Heart right ventricle (tissue), 16 donors: ENCODE measurements at regions of chr19 and their contacts with region 1.

Region 1: DNA sequence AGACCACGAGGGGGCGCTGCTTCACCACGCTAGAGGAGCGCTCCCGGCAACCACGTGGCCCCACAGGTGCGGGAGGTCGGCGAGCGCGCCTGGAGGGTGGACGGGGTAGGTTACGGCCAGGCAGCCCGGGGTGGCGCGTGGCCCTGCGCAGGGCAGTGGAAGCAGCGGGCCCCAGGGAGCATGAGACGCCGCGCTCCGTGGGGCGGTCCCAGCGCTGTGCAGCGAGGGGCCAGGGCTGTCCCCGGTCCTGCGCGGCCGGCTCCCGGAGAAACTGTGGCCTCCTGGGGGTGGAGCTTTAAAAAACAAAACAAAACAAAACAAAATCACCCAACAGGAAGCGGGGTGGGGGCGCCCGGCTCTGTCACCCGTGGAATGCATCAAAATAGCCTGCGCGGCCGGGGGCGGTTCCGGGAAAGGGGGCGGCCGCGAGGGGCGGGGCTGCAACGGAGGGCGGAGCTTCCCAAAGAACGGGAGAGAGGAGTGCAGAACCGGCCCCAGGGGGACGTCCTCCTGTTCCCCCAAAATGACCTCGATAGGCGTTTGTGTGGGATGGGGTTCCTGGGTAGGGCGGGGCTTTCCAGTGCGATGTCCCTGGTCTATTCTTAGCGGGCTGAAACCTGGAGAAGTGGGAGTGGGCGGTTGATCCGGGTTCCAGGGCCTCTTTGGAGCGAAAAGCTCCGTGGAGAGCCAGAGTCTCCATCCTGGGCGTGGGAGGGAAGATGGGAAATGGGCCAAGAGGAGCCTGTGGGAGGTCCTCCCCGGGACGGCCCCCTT is 27.3 kb downstream of the NUMBL start:
- DNase-seq: peak; percentile 94 to 95
- ATAC-seq: peak; percentile 83 to 93 (median 90)
- H3K4me3 ChIP-seq: peak overlapping the region; percentile 36 to 83 (median 65)
- H3K27ac ChIP-seq: peak overlapping the region; percentile 70 to 94 (median 90)
- H3K4me1 ChIP-seq: peaks cover 0 to 23% (median 12%) of the 10 kb centered on the region in 9 donors
- H3K27me3 ChIP-seq: no peaks in the 10 kb centered on the region
- CTCF ChIP-seq: peak; percentile 96 to 100 (median 99)

Region 2: DNA sequence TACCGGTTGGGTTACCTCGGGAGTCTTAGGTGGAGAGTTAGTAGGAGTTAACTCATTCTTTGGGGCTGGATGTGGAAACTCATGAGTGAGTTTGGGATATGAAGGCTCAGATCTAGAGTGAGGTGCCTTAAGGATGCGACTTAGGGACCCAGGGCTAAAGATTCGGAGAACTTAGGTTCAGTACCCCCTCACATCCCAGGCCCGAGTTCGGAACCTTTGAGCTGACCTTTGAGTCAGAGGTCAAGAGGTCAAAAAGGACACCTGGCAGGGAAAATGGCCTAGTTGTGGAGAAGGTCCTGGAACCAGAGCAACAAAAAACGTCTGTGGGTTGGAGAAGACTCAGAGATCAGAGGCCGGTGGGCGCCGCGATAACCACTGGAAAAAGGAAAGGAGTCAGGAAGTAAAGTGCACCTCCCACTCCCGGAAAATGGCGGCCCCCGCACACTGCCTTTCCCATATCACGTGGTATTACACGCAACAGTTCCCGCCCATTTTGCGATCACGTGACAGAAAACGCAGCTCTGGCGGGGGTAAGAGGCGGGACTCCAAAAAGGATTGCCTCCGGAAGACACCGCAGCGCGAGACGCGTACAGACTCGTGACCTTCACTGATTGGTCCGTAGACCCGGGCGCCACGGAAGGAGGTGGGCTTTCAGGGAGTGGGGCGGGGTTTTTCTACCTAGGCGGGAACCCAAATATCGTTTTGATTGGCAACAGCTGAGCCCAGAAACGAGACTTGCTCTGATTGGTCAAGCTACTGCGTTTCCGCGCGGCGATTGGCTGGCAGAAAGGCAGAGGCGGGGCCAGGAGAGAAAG is 87.2 kb after region 1 on chr19 and contains the start of gene ACTMAP:
- intact Hi-C with region 1: loop called in 3 of 10 experiments (anchors 1 to 2 kb)
- DNase-seq: peak; percentile 98 to 100
- ATAC-seq: peak; percentile 95 to 98 (median 97)
- H3K4me3 ChIP-seq: peak within 1 kb of the TSS; percentile 56 to 92 (median 79)
- H3K27ac ChIP-seq: peak within 1 kb of the TSS; percentile 92 to 99 (median 95)
- H3K4me1 ChIP-seq: peaks cover 15 to 66% (median 47%) of the 10 kb centered on the region in 9 donors
- H3K27me3 ChIP-seq: no peaks in the 10 kb centered on the region
- CTCF ChIP-seq: no peak
- total RNA-seq, gene ACTMAP: 5.3 to 11.4 (median 8.4) TPM

Region 3: GRCh38 chr19:40806488-40807468 is 143.7 kb after region 1 on chr19:
- intact Hi-C with region 1: loop called in 4 of 10 experiments (anchors 5 kb)
- DNase-seq: peak; percentile 80 to 92
- ATAC-seq: peak; percentile 30 to 72 (median 58)
- H3K4me3 ChIP-seq: peak overlapping the region in 6 of 10 donors; percentile 2 to 32 (median 24)
- H3K27ac ChIP-seq: peak overlapping the region; percentile 42 to 99 (median 94)
- H3K4me1 ChIP-seq: peaks cover 47 to 93% (median 89%) of the 10 kb centered on the region in 9 donors
- H3K27me3 ChIP-seq: no peaks in the 10 kb centered on the region
- CTCF ChIP-seq: peak; percentile 61 to 94 (median 87)

Region 4: GRCh38 chr19:40822161-40822560 is 159.1 kb after region 1 on chr19:
- intact Hi-C with region 1: loop called in 7 of 10 experiments (anchors 1 to 5 kb)
- DNase-seq: no peak
- ATAC-seq: no peak
- H3K4me3 ChIP-seq: no peak overlapping the region
- H3K27ac ChIP-seq: peak overlapping the region in 4 of 10 donors; percentile 9 to 85 (median 45)
- H3K4me1 ChIP-seq: peaks cover 7 to 42% (median 28%) of the 10 kb centered on the region in 9 donors
- H3K27me3 ChIP-seq: no peaks in the 10 kb centered on the region
- CTCF ChIP-seq: no peak

Region 5: DNA sequence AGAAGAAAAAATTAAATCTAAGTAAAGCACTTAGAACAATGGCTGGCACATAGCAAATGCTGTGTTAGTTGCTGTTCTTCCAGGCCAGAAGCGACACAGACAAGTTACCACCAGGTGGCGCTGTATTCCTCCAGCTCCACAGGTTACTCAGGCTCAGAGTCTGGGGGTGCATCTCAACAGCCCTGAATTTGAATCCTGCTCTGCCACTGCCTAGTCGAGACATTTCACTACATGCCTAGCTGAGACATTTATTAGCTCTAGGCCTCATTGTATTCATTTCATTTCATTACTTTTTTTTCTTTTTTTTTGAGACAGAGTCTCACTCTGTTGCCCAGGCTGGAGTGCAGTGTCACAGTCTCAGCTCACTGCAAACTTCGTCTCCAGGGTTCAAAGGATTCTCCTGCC is 311.5 kb after region 1 on chr19:
- intact Hi-C with region 1: loop called in 1 of 10 experiments (anchors 10 kb)
- DNase-seq: peak; percentile 39 to 54
- ATAC-seq: peak in 3 of 8 donors; percentile 51 to 75 (median 66)
- H3K4me3 ChIP-seq: no peak overlapping the region
- H3K27ac ChIP-seq: no peak overlapping the region
- H3K4me1 ChIP-seq: no peaks in the 10 kb centered on the region
- H3K27me3 ChIP-seq: peaks cover 0 to 46% (median 13%) of the 10 kb centered on the region in 7 donors
- CTCF ChIP-seq: peak; percentile 65 to 91 (median 83)

Region 6: DNA sequence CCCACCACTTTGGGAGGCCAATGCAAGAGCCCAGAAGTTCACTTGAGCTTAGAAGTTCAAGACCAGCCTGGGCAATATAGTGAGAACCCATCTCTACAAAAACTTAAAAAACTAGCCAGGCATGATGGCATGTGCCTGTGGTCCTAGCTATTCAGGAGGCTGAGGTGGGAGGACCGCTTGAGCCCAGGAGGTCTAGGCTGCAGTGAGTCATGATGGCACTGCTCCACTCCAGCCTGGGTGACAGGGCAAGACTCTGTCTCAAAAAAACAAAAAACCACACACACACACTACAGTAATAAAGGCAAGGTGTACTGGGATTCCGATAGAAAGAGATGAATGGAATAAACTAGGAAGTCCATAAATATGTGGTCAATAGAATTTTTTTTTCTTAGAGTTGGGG is 486.7 kb after region 1 on chr19:
- intact Hi-C with region 1: loop called in 6 of 10 experiments (anchors 2 to 10 kb)
- DNase-seq: no peak
- ATAC-seq: no peak
- H3K4me3 ChIP-seq: no peak overlapping the region
- H3K27ac ChIP-seq: no peak overlapping the region
- H3K4me1 ChIP-seq: no peaks in the 10 kb centered on the region
- H3K27me3 ChIP-seq: peaks cover 0 to 31% (median 17%) of the 10 kb centered on the region in 7 donors
- CTCF ChIP-seq: no peak